GM10248 (cell line): ENCODE measurements at regions of chr12 and their contacts with region 1.

Region 1: GRCh38 chr12:62135553-62136200 is 124.5 kb upstream of the USP15 start:
- DNase-seq: no peak
- CTCF ChIP-seq: no peak

Region 2: DNA sequence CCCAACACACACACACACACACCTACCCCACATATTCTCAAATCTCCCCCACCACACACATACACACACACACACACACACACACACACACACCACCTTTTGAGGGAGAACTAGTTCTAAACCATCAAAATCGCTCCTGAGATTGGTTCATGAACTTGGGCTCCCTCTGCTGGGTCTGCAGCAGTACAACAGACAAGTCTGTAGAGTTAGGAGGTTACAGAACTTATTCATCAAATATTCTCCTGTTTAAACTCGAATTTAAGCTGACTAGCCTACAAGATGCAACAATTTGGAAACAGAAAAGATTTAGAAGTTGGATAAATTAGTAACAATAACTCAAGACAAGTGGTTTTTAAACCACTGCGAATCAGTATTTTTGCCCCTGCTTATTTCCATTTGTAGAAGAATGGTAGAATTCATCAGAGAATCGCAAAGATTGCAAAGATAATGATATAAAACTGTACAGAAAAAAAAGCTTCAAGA is 11.9 kb before region 1 on chr12:
- CTCF ChIA-PET with region 1: interaction called, 14 read pairs
- POLR2A ChIA-PET with region 1: no interaction called
- DNase-seq: peak; percentile 16
- CTCF ChIP-seq: peak; percentile 68

Region 3: GRCh38 chr12:62146318-62146717 is 10.6 kb after region 1 on chr12:
- CTCF ChIA-PET with region 1: interaction called, 10 read pairs
- POLR2A ChIA-PET with region 1: no interaction called
- DNase-seq: no peak
- CTCF ChIP-seq: no peak